A673 (cell line): ENCODE measurements at regions of chr9 and their contacts with region 1.

Region 1: GRCh38 chr9:17531642-17532254 is 47.1 kb upstream of the SH3GL2 start:
- DNase-seq: peak; percentile 37
- H3K4me3 ChIP-seq: no peak overlapping the region
- H3K27ac ChIP-seq: no peak overlapping the region
- H3K4me1 ChIP-seq: no peaks in the 10 kb centered on the region
- H3K27me3 ChIP-seq: no peaks in the 10 kb centered on the region
- CTCF ChIP-seq: peak; percentile 63

Region 2: GRCh38 chr9:17802249-17802857 is 270.6 kb after region 1 on chr9:
- CTCF ChIA-PET with region 1: no interaction called
- POLR2A ChIA-PET with region 1: no interaction called
- intact Hi-C with region 1: loop called (anchors 2 kb)
- DNase-seq: peak; percentile 0
- H3K4me3 ChIP-seq: no peak overlapping the region
- H3K27ac ChIP-seq: no peak overlapping the region
- H3K4me1 ChIP-seq: no peaks in the 10 kb centered on the region
- H3K27me3 ChIP-seq: no peaks in the 10 kb centered on the region
- CTCF ChIP-seq: peak; percentile 51

Region 3: GRCh38 chr9:18208154-18209059 is 676.7 kb after region 1 on chr9:
- CTCF ChIA-PET with region 1: no interaction called
- POLR2A ChIA-PET with region 1: no interaction called
- intact Hi-C with region 1: loop called (anchors 5 kb)
- DNase-seq: peak; percentile 1
- H3K4me3 ChIP-seq: no peak overlapping the region
- H3K27ac ChIP-seq: no peak overlapping the region
- H3K4me1 ChIP-seq: no peaks in the 10 kb centered on the region
- H3K27me3 ChIP-seq: no peaks in the 10 kb centered on the region
- CTCF ChIP-seq: peak; percentile 27; the same call in 1 of the 2 replicates